ENCODE measurements at regions of chr6 and their contacts with region 1.

Region 1: GRCh38 chr6:99330159-99330558 is 19.3 kb downstream of the FAXC start:
- DNase-seq: no peak
- H3K4me3 ChIP-seq: no peak overlapping the region
- CTCF ChIP-seq: peak; percentile 72

Region 2: GRCh38 chr6:99318542-99318941 is 11.6 kb before region 1 on chr6:
- CTCF ChIA-PET with region 1: interaction called, 23 read pairs
- POLR2A ChIA-PET with region 1: no interaction called
- DNase-seq: no peak
- H3K4me3 ChIP-seq: no peak overlapping the region
- CTCF ChIP-seq: no peak

Region 3: GRCh38 chr6:99349171-99350141 is 19.3 kb after region 1 on chr6 and contains the start of gene FAXC:
- CTCF ChIA-PET with region 1: interaction called, 109 read pairs
- POLR2A ChIA-PET with region 1: no interaction called
- DNase-seq: no peak
- H3K4me3 ChIP-seq: peak within 1 kb of the TSS; percentile 63
- CTCF ChIP-seq: peak; percentile 22

Region 4: GRCh38 chr6:99425647-99426453 is 95.7 kb after region 1 on chr6:
- CTCF ChIA-PET with region 1: interaction called, 34 read pairs
- POLR2A ChIA-PET with region 1: no interaction called
- DNase-seq: no peak
- H3K4me3 ChIP-seq: peak overlapping the region; percentile 76
- CTCF ChIP-seq: peak; percentile 46

Region 5: GRCh38 chr6:99746261-99746895 is 416.2 kb after region 1 on chr6:
- CTCF ChIA-PET with region 1: interaction called, 21 read pairs
- POLR2A ChIA-PET with region 1: no interaction called
- DNase-seq: peak; percentile 19
- H3K4me3 ChIP-seq: no peak overlapping the region
- CTCF ChIP-seq: peak; percentile 74

Measured in AG04449 (cell line).